Activated CD4-positive, alpha-beta T cell treated with anti-CD3 and anti-CD28 coated beads for 36 hours (primary cell): ENCODE measurements at regions of chr1 and their contacts with region 1.

Region 1: GRCh38 chr1:147890177-147890790 is 12.3 kb upstream of the GJA8 start:
- DNase-seq: peak; percentile 85
- ATAC-seq: peak; percentile 91
- H3K4me3 Mint-ChIP-seq: no peak overlapping the region
- H3K27ac Mint-ChIP-seq: no peak overlapping the region
- H3K4me1 Mint-ChIP-seq: peaks cover 2% of the 10 kb centered on the region
- H3K27me3 Mint-ChIP-seq: no peaks in the 10 kb centered on the region

Region 2: DNA sequence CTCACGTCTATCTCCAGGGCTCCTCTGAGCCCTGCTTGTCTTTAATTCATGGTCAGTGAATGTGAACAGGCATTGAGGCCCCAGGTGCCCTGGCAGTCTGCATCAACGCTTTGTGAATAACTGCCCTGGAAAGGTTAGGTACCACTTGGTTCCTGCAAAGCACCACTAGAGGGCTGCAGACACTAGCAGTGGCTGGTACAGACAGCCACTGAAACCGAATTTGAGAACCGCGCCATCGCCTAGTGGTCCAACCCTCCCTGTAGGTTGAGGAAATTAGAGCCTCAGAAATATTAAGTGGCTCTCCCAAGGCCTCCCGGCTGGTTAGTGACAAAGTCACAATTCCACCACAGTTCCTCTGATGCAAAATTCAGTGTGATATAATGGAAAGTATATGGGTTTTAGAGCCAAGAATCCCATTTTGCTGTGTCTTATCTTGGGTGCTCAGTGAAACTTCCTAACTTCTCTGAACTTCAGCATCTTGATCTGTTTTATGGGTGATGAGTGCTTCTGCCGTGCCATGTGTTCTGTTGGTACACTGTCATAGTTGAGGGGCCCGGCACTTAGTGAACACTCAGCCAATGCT is 395.2 kb before region 1 on chr1:
- CTCF ChIA-PET with region 1: interaction called, 10 read pairs
- POLR2A ChIA-PET with region 1: no interaction called
- intact Hi-C with region 1: loop called (anchors 1 kb)
- DNase-seq: peak; percentile 85
- ATAC-seq: peak; percentile 100
- H3K4me3 Mint-ChIP-seq: no peak overlapping the region
- H3K27ac Mint-ChIP-seq: no peak overlapping the region
- H3K4me1 Mint-ChIP-seq: peaks cover 3% of the 10 kb centered on the region
- H3K27me3 Mint-ChIP-seq: peaks cover 2% of the 10 kb centered on the region

Region 3: DNA sequence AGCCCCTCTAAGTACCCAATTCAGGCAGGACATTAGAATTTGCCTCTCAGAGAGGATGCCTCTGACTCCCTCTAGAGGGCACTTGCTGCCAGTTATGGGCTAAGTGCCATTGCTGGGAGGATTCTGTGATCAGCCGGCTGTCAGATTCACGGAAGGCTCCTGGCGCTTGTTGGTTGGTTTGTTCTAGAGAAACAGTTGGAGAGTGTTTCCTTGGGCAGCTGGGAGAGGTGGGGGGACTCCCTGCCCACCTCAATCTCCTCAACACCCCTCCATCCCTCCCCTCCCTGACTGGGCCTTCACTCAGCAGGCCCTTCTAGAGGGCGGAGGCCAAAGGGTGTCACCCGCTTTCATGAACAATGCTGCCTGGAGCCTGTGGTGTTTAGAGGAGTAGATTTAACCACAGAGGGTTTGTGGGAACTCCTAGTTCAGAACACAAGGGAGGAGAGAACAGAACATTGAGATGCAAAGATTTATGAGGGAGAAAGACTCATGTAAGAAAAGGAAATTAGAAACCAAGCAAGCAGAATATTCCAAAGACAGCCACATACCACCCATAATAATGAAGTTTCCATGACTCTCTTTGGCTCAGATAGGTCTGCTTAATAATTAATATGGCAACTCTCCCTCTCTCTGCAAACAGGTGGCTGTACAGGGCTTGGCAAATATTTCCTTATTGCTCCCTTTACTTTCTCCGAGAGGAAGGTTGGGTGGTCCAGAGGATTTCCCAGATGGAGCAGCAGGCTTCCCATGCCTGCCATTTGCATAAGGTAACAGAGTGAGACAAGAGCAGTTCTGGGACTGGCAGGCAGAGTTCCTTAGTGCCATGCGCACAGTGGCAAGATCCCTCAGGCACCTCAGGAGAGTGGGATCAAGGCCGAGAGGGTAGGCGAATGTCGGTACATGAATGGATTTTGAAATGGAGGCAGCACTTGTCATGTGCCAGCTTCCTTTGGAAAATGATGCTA is 190.0 kb before region 1 on chr1:
- CTCF ChIA-PET with region 1: interaction called, 28 read pairs
- POLR2A ChIA-PET with region 1: no interaction called
- intact Hi-C with region 1: loop called in 1 of 2 experiments (anchors 1 kb)
- DNase-seq: peak; percentile 74
- ATAC-seq: peak; percentile 97
- H3K4me3 Mint-ChIP-seq: no peak overlapping the region
- H3K27ac Mint-ChIP-seq: peak overlapping the region; percentile 66
- H3K4me1 Mint-ChIP-seq: peaks cover 10% of the 10 kb centered on the region
- H3K27me3 Mint-ChIP-seq: peaks cover 2% of the 10 kb centered on the region

Region 4: DNA sequence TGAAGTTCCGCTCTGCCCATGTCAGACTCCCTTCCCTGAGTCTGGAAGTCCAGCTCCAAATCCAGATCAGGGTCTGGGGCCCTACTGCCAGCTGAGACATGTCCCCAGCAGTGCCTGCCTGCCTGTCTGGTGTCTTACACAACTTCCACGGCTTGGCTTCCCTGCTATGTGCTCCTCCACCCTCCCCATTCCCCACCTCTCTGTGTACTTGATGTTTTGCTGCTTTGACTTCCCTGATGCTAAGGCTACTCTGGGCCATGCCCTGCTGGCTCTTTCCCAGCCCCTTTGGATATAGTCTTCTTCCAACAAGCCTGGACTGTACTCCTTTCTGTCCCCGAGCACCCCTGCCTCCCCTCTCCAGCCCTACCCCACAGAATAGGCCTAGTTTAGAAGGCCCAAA is 137.2 kb before region 1 on chr1:
- CTCF ChIA-PET with region 1: no interaction called
- POLR2A ChIA-PET with region 1: no interaction called
- intact Hi-C with region 1: no loop called
- DNase-seq: no peak
- ATAC-seq: no peak
- H3K4me3 Mint-ChIP-seq: no peak overlapping the region
- H3K27ac Mint-ChIP-seq: no peak overlapping the region
- H3K4me1 Mint-ChIP-seq: no peaks in the 10 kb centered on the region
- H3K27me3 Mint-ChIP-seq: no peaks in the 10 kb centered on the region

Region 5: DNA sequence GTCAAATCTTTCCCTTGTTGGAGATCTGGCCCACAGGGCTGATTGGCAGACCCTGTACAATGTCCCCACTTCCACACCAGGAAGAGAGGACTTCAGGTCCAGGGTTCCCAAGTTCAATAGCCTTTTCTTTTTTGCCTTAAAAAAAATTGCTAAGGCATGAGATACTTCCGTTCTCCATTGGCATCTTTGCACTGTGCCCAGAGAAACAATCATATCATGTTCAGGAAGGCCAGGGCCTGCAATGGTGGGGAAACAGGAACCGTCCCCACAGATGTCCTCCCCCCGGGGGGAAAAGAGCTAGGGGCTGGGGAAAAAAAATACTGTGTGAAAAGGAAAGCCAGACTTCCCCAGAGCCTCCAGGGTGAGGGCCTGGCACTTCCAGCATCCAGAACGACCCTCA is 12.3 kb before region 1 on chr1:
- CTCF ChIA-PET with region 1: interaction called, 14 read pairs
- POLR2A ChIA-PET with region 1: no interaction called
- intact Hi-C with region 1: no loop called
- DNase-seq: no peak
- ATAC-seq: no peak
- H3K4me3 Mint-ChIP-seq: no peak overlapping the region
- H3K27ac Mint-ChIP-seq: no peak overlapping the region
- H3K4me1 Mint-ChIP-seq: no peaks in the 10 kb centered on the region
- H3K27me3 Mint-ChIP-seq: peaks cover 9% of the 10 kb centered on the region